ENCODE measurements at regions of chr9 and their contacts with region 1.

Region 1: GRCh38 chr9:20092560-20092959 is 303.7 kb upstream of the SLC24A2 start:
- DNase-seq: no peak
- H3K4me3 ChIP-seq: no peak overlapping the region
- H3K27ac ChIP-seq: no peak overlapping the region
- H3K4me1 ChIP-seq: no peaks in the 10 kb centered on the region
- H3K27me3 ChIP-seq: no peaks in the 10 kb centered on the region
- CTCF ChIP-seq: no peak

Region 2: DNA sequence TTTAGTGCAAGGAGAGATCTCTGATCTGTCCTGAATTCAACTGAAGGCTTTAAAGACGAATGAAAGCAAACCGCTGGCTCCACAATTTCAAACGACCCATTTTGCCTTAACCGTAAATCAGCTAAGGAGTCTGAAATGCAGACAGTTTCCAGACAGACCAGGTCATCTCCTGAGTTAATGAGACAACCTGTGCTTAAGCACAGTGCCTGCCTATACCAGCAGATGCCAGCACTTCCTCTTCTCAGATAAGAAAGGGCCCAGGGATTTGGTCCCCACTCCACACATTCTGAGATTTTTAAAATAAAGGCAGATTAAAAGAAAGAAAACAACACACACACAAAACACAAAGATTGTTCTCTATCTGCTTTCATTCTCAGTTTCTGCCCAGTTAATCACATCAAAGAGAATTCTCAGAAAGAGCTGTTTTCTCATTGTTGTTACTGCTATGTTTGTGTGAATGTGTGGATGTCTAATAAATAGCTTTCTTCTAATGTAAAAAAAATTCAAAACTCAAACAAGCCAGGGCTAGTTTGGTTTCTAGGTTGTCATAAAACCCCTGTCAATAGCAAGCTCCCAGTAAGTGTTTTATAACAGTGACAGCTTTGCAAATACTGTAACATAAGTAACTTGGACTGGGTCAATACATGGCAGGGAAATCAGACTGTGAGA is 146.0 kb before region 1 on chr9:
- CTCF ChIA-PET with region 1: no interaction called
- dilution Hi-C with region 1: no loop called
- in situ Hi-C with region 1: no loop called
- intact Hi-C with region 1: no loop called
- DNase-seq: peak; percentile 32
- H3K4me3 ChIP-seq: no peak overlapping the region
- H3K27ac ChIP-seq: no peak overlapping the region
- H3K4me1 ChIP-seq: peaks cover 2% of the 10 kb centered on the region
- H3K27me3 ChIP-seq: no peaks in the 10 kb centered on the region
- CTCF ChIP-seq: peak; percentile 55 to 75

Region 3: DNA sequence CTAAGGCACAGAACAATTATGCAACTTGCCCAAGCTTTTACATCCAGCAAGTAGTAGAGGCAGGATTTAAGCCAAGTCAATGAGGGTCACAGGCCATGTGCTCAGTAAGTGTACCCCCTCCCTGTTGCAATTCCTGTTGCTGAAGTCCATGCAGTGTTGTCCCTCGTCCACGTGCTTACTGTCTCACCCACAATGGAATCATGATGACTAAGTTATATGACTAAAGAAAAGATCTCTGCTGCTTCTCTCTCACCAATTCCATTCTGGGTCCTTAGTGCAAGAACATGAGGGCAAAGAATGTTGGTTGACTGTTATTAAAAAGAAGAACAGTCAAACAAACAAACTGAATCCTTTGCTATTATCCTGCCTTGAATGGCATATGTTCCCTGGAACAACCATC is 70.2 kb before region 1 on chr9:
- CTCF ChIA-PET with region 1: no interaction called
- dilution Hi-C with region 1: loop called (anchors 5 kb)
- in situ Hi-C with region 1: no loop called
- intact Hi-C with region 1: no loop called
- DNase-seq: no peak
- H3K4me3 ChIP-seq: no peak overlapping the region
- H3K27ac ChIP-seq: no peak overlapping the region
- H3K4me1 ChIP-seq: peaks cover 3% of the 10 kb centered on the region
- H3K27me3 ChIP-seq: no peaks in the 10 kb centered on the region
- CTCF ChIP-seq: no peak

Region 4: GRCh38 chr9:20032413-20033006 is 60.0 kb before region 1 on chr9:
- CTCF ChIA-PET with region 1: no interaction called
- dilution Hi-C with region 1: no loop called
- in situ Hi-C with region 1: no loop called
- intact Hi-C with region 1: no loop called
- DNase-seq: no peak
- H3K4me3 ChIP-seq: no peak overlapping the region
- H3K27ac ChIP-seq: no peak overlapping the region
- H3K4me1 ChIP-seq: no peaks in the 10 kb centered on the region
- H3K27me3 ChIP-seq: no peaks in the 10 kb centered on the region
- CTCF ChIP-seq: no peak

Measured in mammary epithelial cell (primary cell).